CD4-positive, alpha-beta memory T cell (primary cell): ENCODE measurements at regions of chr11 and their contacts with region 1.

Region 1: DNA sequence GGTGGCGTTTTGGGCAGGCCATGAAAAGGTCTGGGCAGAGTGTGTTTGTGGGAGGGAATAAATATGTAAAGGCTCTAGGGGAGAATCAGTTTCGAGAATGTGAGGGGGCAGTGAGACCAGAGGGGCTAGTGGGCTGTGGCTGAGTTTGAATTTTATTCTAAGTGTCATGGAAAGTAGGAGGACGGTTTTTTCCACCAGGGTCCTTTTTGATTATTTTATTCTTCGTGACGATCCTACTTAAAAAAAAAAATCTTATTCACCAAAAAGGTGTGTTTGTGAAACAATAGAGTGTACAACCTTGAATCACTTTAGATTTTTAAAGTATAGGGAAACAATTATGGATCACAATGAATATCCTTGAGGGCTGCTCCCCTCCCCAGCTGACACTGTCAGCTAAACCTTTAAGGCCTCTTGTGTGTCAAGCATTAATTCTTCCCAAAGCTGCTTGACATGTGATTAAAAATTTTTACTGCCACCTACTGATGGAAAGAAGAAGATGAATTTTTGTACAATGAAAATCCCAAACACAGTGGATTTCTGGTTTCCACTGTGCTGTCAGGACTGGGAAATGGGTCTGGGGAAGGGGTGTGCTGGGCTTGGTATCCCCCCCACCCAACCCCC is 107.5 kb upstream of the OR4B1 start:
- DNase-seq: peak; percentile 33 to 47 (median 40)
- H3K4me3 ChIP-seq: peak overlapping the region in 1 of 2 donors; percentile 54
- H3K4me3 Mint-ChIP-seq: peak overlapping the region; percentile 52 to 90 (median 80)
- H3K27ac ChIP-seq: peak overlapping the region; percentile 64
- H3K27ac Mint-ChIP-seq: peak overlapping the region; percentile 70 to 95 (median 88)
- H3K4me1 ChIP-seq: peaks cover 50% of the 10 kb centered on the region
- H3K4me1 Mint-ChIP-seq: peaks cover 36 to 53% (median 45%) of the 10 kb centered on the region in 4 donors
- H3K27me3 ChIP-seq: no peaks in the 10 kb centered on the region
- H3K27me3 Mint-ChIP-seq: no peaks in the 10 kb centered on the region

Region 2: GRCh38 chr11:47642099-47642855 is 466.9 kb before region 1 on chr11 and contains the start of gene MTCH2:
- CTCF ChIA-PET with region 1: no interaction called
- POLR2A ChIA-PET with region 1: no interaction called
- intact Hi-C with region 1: loop called (anchors 1 kb)
- DNase-seq: peak; percentile 95 to 96 (median 96)
- H3K4me3 ChIP-seq: peak within 1 kb of the TSS; percentile 86 to 90
- H3K4me3 Mint-ChIP-seq: peak within 1 kb of the TSS; percentile 82 to 98 (median 96)
- H3K27ac ChIP-seq: peak within 1 kb of the TSS; percentile 93
- H3K27ac Mint-ChIP-seq: peak within 1 kb of the TSS; percentile 84 to 99 (median 98)
- H3K4me1 ChIP-seq: peaks cover 23% of the 10 kb centered on the region
- H3K4me1 Mint-ChIP-seq: peaks cover 11 to 31% (median 18%) of the 10 kb centered on the region in 4 donors
- H3K27me3 ChIP-seq: no peaks in the 10 kb centered on the region
- H3K27me3 Mint-ChIP-seq: no peaks in the 10 kb centered on the region
- total RNA-seq, gene MTCH2: 23.6 to 23.9 TPM

Region 3: DNA sequence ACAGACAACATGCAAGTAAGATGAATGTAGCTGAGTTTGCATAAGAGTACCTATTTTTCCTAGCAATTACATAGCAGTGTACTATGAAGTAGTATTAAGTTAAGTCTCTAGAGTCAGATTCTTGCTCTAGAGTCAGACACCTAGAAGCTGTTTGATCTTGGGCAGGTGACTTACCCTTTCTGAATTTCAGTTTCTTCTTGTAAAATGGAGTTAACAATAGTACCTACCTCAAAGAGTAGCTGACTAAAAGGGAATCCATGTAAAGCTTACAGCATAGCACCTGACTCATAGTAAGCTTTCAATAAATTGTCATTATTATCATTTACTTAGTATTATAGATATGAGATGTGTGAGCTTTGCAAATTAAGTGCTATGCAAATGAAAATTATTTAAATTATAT is 176.6 kb before region 1 on chr11:
- CTCF ChIA-PET with region 1: interaction called, 487 read pairs
- POLR2A ChIA-PET with region 1: interaction called, 29 read pairs
- intact Hi-C with region 1: loop called (anchors 1 kb)
- DNase-seq: no peak
- H3K4me3 ChIP-seq: no peak overlapping the region
- H3K4me3 Mint-ChIP-seq: no peak overlapping the region
- H3K27ac ChIP-seq: no peak overlapping the region
- H3K27ac Mint-ChIP-seq: no peak overlapping the region
- H3K4me1 ChIP-seq: peaks cover 10% of the 10 kb centered on the region
- H3K4me1 Mint-ChIP-seq: peaks cover 8 to 20% (median 15%) of the 10 kb centered on the region in 4 donors
- H3K27me3 ChIP-seq: no peaks in the 10 kb centered on the region
- H3K27me3 Mint-ChIP-seq: no peaks in the 10 kb centered on the region

Region 4: DNA sequence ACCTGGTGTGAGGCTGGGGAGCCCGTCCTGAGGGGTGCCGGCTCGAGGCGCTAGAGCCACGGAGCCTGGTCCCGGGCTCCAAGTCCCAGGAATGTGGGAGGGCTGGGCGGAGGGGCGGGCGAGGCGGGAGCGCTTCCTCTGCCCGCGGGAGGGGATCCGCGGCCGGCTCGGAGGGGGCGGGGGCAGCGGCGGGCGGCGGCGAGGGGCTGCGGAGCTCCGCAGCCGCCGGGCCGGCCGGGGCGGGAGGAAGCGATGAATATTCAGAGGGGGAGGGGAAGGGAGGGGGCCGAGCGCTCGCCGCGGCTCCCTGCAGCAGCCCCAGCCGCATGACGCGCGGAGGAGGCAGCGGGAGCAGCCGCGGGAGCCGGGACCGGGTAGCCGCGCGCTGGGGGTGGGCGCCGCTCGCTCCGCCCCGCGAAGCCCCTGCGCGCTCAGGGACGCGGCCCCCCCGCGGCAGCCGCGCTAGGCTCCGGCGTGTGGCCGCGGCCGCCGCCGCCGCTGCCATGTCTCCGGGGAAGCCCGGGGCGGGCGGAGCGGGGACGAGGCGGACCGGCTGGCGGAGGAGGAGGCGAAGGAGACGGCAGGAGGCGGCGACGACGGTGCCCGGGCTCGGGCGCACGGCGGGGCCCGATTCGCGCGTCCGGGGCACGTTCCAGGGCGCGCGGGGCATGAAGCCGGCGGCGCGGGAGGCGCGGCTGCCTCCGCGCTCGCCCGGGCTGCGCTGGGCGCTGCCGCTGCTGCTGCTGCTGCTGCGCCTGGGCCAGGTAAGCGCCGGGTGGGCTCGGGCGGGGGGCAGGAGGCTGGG is 128.7 kb before region 1 on chr11 and contains the start of gene PTPRJ:
- CTCF ChIA-PET with region 1: interaction called, 15 read pairs
- POLR2A ChIA-PET with region 1: interaction called, 7 read pairs
- intact Hi-C with region 1: loop called (anchors 5 kb)
- DNase-seq: peak; percentile 68 to 76 (median 72)
- H3K4me3 ChIP-seq: peak within 1 kb of the TSS in 1 of 2 donors; percentile 56
- H3K4me3 Mint-ChIP-seq: peak within 1 kb of the TSS; percentile 70 to 97 (median 93)
- H3K27ac ChIP-seq: peak within 1 kb of the TSS; percentile 53
- H3K27ac Mint-ChIP-seq: peak within 1 kb of the TSS; percentile 32 to 95 (median 53)
- H3K4me1 ChIP-seq: peaks cover 44% of the 10 kb centered on the region
- H3K4me1 Mint-ChIP-seq: peaks cover 28 to 40% (median 31%) of the 10 kb centered on the region in 4 donors
- H3K27me3 ChIP-seq: no peaks in the 10 kb centered on the region
- H3K27me3 Mint-ChIP-seq: no peaks in the 10 kb centered on the region
- total RNA-seq, gene PTPRJ: 57.8 to 57.9 TPM

Region 5: GRCh38 chr11:48013269-48013901 is 95.8 kb before region 1 on chr11:
- CTCF ChIA-PET with region 1: interaction called, 40 read pairs
- POLR2A ChIA-PET with region 1: interaction called, 19 read pairs
- intact Hi-C with region 1: no loop called
- DNase-seq: peak; percentile 47 to 83 (median 54)
- H3K4me3 ChIP-seq: peak overlapping the region in 1 of 2 donors; percentile 44
- H3K4me3 Mint-ChIP-seq: peak overlapping the region in 7 of 8 donors; percentile 67 to 83 (median 77)
- H3K27ac ChIP-seq: peak overlapping the region; percentile 76
- H3K27ac Mint-ChIP-seq: peak overlapping the region; percentile 84 to 98 (median 97)
- H3K4me1 ChIP-seq: peaks cover 93% of the 10 kb centered on the region
- H3K4me1 Mint-ChIP-seq: peaks cover 66 to 91% (median 83%) of the 10 kb centered on the region in 4 donors
- H3K27me3 ChIP-seq: no peaks in the 10 kb centered on the region
- H3K27me3 Mint-ChIP-seq: no peaks in the 10 kb centered on the region

Region 6: GRCh38 chr11:48097041-48097476 is 12.1 kb before region 1 on chr11:
- CTCF ChIA-PET with region 1: interaction called, 21 read pairs
- POLR2A ChIA-PET with region 1: interaction called, 7 read pairs
- intact Hi-C with region 1: no loop called
- DNase-seq: no peak
- H3K4me3 ChIP-seq: no peak overlapping the region
- H3K4me3 Mint-ChIP-seq: no peak overlapping the region
- H3K27ac ChIP-seq: no peak overlapping the region
- H3K27ac Mint-ChIP-seq: peak overlapping the region in 3 of 7 donors; percentile 1 to 52 (median 29)
- H3K4me1 ChIP-seq: peaks cover 37% of the 10 kb centered on the region
- H3K4me1 Mint-ChIP-seq: peaks cover 41 to 61% (median 52%) of the 10 kb centered on the region in 4 donors
- H3K27me3 ChIP-seq: no peaks in the 10 kb centered on the region
- H3K27me3 Mint-ChIP-seq: no peaks in the 10 kb centered on the region

Region 7: DNA sequence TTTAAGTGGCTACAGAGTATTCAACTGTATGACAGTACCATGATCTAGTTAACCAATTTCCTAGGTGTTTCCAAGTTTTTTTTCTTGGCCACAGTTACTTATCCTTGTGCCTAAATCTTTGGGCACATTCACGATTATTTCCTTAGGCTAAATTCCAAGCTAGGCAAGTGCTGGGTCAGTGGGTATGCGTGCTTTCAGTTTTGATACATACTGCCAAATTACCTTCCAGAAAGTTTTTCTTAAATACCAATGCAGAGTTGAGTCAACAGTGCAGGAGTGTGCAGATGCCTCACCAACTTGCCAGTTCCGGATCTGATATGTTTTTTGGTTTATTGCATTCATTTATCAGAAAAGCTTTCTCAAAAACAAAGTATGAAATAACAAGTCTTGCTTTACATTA is 39.6 kb after region 1 on chr11:
- CTCF ChIA-PET with region 1: no interaction called
- POLR2A ChIA-PET with region 1: no interaction called
- intact Hi-C with region 1: no loop called
- DNase-seq: no peak
- H3K4me3 ChIP-seq: no peak overlapping the region
- H3K4me3 Mint-ChIP-seq: no peak overlapping the region
- H3K27ac ChIP-seq: no peak overlapping the region
- H3K27ac Mint-ChIP-seq: no peak overlapping the region
- H3K4me1 ChIP-seq: peaks cover 6% of the 10 kb centered on the region
- H3K4me1 Mint-ChIP-seq: peaks cover 2 to 15% (median 12%) of the 10 kb centered on the region in 4 donors
- H3K27me3 ChIP-seq: no peaks in the 10 kb centered on the region
- H3K27me3 Mint-ChIP-seq: no peaks in the 10 kb centered on the region